GM12878 (cell line): ENCODE measurements at regions of chr1 and their contacts with region 1.

Region 1: DNA sequence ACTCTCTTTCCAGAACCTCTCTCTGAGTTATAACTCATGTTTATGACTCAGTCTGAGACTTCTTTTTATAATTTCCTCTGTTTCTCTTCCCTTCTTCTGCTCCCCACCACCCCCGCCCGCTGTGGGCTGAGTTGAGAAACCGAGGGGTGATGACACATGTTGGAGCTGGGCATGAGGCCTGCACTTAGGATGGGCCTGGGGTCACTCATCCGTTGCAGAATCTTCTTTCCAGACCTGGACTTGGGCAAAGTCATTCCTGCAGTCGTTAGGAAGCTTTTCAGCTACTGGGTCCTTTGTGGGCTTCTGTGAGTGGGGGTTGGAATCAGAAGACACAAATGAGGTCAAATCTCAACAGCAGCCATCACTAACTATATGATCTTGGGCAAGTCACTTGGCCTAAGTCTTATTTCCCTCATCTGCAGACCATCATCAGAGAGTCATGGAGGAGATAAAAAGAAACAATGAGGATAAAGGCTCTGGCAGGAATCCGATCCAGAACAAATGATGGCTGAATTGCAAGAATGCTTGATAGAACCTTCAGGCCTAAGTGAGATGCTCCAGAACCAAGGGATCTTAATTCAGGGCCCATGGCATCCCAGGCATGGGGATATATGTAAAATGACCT is 53.4 kb downstream of the RPS6KA1 start:
- DNase-seq: peak; percentile 56
- ATAC-seq: peak; percentile 67
- H3K4me3 ChIP-seq: no peak overlapping the region
- H3K27ac ChIP-seq: peak overlapping the region; percentile 87
- H3K4me1 ChIP-seq: peaks cover 56% of the 10 kb centered on the region
- H3K27me3 ChIP-seq: no peaks in the 10 kb centered on the region
- CTCF ChIP-seq: no peak
- EP300 ChIP-seq: peak in 1 of 2 experiments; percentile 70; a peak in 1 of 4 replicates
- POLR2A ChIP-seq: no peak
- RAD21 ChIP-seq: no peak

Region 2: DNA sequence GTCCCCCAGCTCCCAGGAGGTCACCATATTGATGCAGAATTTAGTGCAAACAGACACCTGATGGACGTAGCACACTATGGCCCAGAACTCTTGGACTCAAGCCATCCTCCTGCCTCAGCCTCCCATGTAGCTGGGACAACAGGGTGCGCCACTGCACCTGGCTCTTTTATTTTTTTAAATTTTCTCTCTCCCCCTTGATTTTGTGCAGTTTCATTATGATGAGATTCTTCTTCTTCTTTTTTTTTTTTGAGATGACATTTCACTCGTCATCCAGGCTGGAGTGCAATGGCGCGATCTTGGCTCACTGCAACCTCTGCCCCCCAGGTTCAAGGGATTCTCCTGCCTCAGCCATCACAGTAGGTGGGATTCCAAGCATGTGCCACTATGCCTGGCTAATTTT is 10.4 kb after region 1 on chr1:
- CTCF ChIA-PET with region 1: interaction called, 13 read pairs
- POLR2A ChIA-PET with region 1: interaction called, 3 read pairs
- RAD21 ChIA-PET with region 1: interaction called, 9 read pairs
- SMC1A ChIA-PET with region 1: interaction called, 7 read pairs
- in situ Hi-C with region 1: no loop called
- intact Hi-C with region 1: no loop called
- DNase-seq: no peak
- ATAC-seq: no peak; the same call in 2 of the 3 replicates
- H3K4me3 ChIP-seq: no peak overlapping the region
- H3K27ac ChIP-seq: no peak overlapping the region
- H3K4me1 ChIP-seq: peaks cover 5% of the 10 kb centered on the region; the same call in 1 of the 2 replicates
- H3K27me3 ChIP-seq: no peaks in the 10 kb centered on the region
- CTCF ChIP-seq: no peak
- EP300 ChIP-seq: no peak
- POLR2A ChIP-seq: no peak
- RAD21 ChIP-seq: no peak

Region 3: DNA sequence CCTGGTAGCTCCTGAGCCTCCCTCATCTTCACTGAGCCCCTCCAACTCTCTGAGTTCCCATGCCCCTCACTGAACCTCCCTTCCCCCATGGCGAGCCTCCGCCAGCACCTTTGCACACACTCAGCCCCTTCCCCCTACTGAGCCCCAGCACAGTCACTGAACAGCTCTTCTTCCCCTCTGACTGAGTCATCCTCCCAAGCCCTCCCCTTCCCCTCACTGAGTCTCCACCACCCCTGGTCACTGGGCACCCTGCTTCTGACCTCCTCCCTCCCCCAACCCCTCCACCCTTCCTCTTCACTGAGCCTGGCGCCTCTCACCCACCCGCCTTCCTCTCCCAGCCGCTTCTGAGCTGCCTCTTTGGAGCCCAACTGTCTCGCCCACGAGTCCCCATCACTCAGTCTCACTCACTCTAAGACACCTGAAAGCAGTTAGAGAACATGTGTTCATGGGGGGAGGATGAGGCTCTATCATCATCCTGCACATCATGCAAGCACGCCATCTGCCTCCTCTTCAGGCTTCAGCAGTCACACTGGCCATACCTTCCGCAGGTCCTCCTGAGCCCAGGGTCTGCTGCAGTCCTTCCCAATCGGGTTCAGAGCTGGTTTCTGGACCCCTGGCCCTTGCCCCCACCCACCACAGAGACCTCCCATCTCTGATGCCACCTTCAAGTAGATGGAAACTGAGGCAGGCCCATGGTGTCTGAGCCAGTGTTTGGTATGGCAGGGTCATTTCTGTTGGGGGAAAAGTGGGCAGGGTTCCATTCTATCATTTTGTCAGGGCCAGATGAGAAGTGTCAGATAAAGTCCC is 408.6 kb after region 1 on chr1:
- CTCF ChIA-PET with region 1: no interaction called
- POLR2A ChIA-PET with region 1: no interaction called
- RAD21 ChIA-PET with region 1: no interaction called
- SMC1A ChIA-PET with region 1: no interaction called
- in situ Hi-C with region 1: no loop called
- intact Hi-C with region 1: no loop called
- DNase-seq: no peak
- ATAC-seq: peak; percentile 8; the same call in 1 of the 3 replicates
- H3K4me3 ChIP-seq: no peak overlapping the region
- H3K27ac ChIP-seq: no peak overlapping the region
- H3K4me1 ChIP-seq: peaks cover 5% of the 10 kb centered on the region
- H3K27me3 ChIP-seq: peaks cover 2 to 13% of the 10 kb centered on the region in 2 experiments
- CTCF ChIP-seq: no peak
- EP300 ChIP-seq: no peak
- POLR2A ChIP-seq: no peak
- RAD21 ChIP-seq: no peak